ENCODE measurements at regions of chr7 and their contacts with region 1.

Region 1: DNA sequence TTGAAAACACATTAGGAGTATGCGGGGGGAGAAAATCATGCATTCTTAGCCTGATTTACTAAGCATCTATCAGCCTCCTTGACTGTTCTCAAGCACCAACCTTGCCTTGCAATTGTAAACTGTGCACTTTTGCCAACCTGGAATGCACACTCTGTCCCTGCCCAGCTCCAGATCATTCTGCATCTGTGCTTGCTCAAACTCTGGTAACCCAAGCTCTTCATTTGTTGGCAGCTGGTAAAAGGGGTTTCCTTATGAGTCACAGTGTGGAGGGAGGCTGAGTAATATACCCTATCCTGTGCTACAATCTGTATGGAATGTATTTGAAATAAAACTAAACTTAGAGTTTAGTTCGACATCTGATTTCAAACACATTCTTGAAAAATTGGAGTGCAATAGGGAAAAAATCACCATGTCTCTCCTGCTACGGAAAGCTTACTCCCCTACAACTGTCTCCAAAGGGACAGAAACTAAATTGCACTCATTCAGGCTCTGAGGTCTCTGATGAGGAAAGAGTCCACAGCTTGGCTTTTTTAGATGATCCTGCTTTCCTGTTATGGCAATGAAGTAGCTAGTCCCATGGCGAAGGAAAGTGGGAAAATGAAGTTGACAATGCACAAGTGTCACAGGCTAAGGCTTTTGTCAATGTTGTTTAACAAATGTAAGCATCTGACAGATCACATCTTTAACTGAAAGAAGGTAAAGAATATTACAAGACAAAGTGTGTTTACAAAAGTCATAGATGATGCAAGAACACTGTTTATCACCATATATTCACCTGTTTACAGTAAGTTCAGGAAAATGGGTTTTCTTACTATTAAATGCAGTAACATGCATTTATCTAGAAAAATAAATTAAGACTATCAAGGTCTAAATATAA is 61.9 kb downstream of the TES start:
- DNase-seq: peak; percentile 62
- H3K4me3 Mint-ChIP-seq: peak overlapping the region; percentile 23
- H3K27ac Mint-ChIP-seq: peak overlapping the region; percentile 68
- H3K4me1 Mint-ChIP-seq: peaks cover 52% of the 10 kb centered on the region
- H3K27me3 Mint-ChIP-seq: no peaks in the 10 kb centered on the region
- CTCF ChIP-seq: no peak

Region 2: GRCh38 chr7:116316833-116317612 is 44.8 kb after region 1 on chr7:
- CTCF ChIA-PET with region 1: no interaction called
- intact Hi-C with region 1: loop called (anchors 5 kb)
- DNase-seq: peak; percentile 63
- H3K4me3 Mint-ChIP-seq: peak overlapping the region; percentile 57
- H3K27ac Mint-ChIP-seq: peak overlapping the region; percentile 67
- H3K4me1 Mint-ChIP-seq: peaks cover 21% of the 10 kb centered on the region
- H3K27me3 Mint-ChIP-seq: no peaks in the 10 kb centered on the region
- CTCF ChIP-seq: no peak

Region 3: DNA sequence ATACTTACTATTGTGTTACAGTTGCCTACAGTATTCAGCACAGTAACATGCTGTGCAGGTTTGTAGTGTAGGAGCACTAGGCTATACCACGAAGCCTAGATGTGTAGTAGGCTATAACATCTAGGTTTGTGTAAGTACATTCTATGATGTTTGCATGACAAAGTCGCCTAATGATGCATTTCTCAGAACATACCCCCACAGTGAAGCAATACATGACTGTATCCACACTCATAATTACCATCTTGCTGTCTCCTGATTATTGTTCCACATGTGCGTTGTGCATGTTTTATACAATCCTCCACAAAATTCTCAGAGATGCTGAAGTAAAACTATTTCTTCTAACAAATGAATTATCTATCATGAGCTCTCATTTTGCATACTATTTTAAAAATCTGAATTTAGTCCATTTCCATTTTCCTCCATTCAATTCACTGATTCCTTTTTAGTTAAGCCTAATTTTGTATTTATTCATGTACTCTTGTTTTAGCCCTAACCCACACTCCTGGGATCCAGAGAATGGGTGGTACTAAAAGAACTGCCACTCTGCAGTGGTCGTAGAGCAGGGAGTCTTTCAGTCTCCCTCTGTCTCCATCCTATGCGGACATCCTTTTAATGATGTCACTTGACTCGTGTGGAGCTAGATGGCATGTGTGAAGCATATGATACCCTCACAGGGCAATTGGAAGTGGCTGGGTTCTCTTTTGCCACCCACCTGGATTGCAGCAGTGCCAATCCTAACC is 159.8 kb after region 1 on chr7:
- CTCF ChIA-PET with region 1: no interaction called
- intact Hi-C with region 1: no loop called
- DNase-seq: no peak
- H3K4me3 Mint-ChIP-seq: no peak overlapping the region
- H3K27ac Mint-ChIP-seq: no peak overlapping the region
- H3K4me1 Mint-ChIP-seq: peaks cover 27% of the 10 kb centered on the region
- H3K27me3 Mint-ChIP-seq: no peaks in the 10 kb centered on the region
- CTCF ChIP-seq: no peak

Region 4: DNA sequence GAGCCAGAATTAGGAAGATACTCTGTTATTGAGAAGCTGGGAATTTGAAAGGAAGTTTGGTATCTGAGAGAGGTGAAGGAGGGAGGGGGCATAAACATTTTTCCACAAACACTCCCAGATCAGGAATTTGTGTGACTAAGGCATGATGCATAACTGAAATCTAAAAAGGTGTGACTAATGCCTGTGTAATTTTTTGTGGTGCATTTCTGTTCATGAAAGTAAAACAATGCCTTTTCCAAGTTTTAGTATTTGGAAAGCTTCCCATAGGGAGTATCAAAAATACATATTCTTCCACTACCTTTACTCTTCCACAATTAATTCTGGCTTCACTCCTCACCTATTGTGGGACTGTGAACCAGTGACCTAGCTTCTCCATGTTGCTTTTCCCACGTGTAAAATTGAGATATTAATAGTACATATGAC is 170.9 kb after region 1 on chr7:
- CTCF ChIA-PET with region 1: no interaction called
- intact Hi-C with region 1: loop called (anchors 5 kb)
- DNase-seq: peak; percentile 36
- H3K4me3 Mint-ChIP-seq: no peak overlapping the region
- H3K27ac Mint-ChIP-seq: peak overlapping the region; percentile 71
- H3K4me1 Mint-ChIP-seq: peaks cover 65% of the 10 kb centered on the region
- H3K27me3 Mint-ChIP-seq: no peaks in the 10 kb centered on the region
- CTCF ChIP-seq: no peak

Region 5: GRCh38 chr7:116461500-116461899 is 189.3 kb after region 1 on chr7:
- CTCF ChIA-PET with region 1: no interaction called
- intact Hi-C with region 1: no loop called
- DNase-seq: no peak
- H3K4me3 Mint-ChIP-seq: no peak overlapping the region
- H3K27ac Mint-ChIP-seq: no peak overlapping the region
- H3K4me1 Mint-ChIP-seq: peaks cover 11% of the 10 kb centered on the region
- H3K27me3 Mint-ChIP-seq: no peaks in the 10 kb centered on the region
- CTCF ChIP-seq: no peak